Common myeloid progenitor, CD34-positive (primary cell): ENCODE measurements at regions of chr20 and their contacts with region 1.

Region 1: DNA sequence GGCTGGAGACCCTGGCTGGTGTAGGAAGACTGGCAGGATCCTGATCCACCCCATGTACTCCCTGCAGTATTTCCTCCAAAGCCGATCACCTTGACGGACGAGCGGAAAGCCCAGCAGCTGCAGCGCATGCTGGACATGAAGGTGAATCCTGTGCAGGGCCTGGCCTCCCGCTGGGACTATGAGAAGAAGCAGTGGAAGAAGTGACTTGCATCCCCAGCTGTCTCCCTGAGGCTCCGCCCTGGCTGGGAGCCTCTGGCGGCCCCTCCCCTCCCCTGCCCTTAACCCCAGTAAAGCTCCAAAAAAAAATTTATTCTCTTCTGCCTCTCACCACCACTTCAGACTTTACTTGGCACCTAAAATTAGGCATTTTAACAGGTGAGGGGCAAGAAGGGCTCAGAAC is 7.0 kb downstream of the COX4I2 start:
- DNase-seq: no peak
- H3K4me3 ChIP-seq: no peak overlapping the region
- H3K27ac ChIP-seq: no peak overlapping the region
- H3K4me1 ChIP-seq: peaks cover 0 to 8% (median 4%) of the 10 kb centered on the region in 4 experiments
- H3K27me3 ChIP-seq: no peaks in the 10 kb centered on the region

Region 2: DNA sequence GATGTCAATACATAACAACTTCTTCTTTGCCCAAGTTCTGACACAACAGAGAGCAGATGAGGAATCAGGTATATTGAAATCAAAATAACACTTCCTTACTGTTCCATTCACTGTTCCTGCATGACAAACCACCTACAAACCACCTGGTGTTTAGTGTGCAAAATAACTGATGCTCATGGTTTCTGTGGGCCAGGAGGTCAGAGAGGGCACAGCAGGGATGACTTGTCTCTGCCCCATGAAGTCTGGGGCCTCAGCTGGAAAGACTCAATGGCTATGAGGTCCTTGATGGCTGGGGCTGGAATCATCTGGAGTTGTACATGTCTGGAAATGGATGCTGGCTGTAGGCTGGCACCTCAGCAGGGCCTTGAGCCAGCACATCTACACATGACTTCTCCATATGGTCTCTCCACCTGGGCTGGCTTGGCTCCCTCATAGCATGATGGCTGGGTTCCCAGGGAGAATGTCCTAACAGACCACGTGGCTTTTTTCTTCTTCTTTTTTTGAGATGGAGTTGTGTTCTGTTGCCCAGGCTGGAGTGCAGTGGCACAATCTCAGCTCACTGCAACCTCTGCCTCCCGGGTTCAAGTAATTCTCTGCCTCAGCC is 14.4 kb before region 1 on chr20:
- CTCF ChIA-PET with region 1: interaction called, 53 read pairs
- POLR2A ChIA-PET with region 1: no interaction called
- DNase-seq: no peak
- H3K4me3 ChIP-seq: no peak overlapping the region
- H3K27ac ChIP-seq: no peak overlapping the region
- H3K4me1 ChIP-seq: no peaks in the 10 kb centered on the region
- H3K27me3 ChIP-seq: no peaks in the 10 kb centered on the region

Region 3: DNA sequence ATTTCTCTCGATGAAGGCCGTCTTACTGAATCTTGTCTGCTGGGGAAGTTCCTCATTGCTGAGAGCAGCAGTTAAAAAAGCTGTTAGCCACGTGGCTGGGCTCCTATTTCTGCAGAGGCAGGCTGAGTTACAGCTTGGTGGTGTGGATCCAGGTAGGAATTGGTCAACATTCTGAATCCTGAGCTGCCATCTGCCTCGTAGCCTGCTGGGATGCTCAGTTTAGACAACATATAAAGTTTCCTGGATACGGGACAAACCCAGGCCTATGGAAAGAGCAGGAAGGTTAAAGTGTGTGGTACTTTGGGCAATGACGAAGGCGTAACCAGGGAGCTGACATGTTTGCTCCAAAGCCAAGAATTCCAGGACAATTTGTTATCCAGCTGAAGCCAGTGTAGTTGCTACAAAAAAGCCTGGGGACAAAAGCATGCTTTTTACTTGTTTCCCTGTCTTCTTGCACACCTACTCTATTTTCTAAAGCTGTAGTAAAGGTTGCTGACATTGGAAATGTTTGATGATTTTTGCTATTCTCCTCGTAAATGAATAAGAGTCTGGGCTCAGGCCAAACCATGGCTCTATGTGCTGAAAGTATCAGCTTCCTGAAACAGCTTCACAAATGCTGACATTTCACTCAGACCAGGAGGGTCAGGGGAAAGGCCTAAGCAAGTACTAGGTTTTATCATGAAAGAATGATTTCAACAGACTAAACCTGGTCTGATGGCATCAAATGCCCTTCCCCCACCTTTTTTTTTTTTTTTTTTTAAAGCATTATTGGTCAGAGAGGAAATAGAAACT is 162.1 kb after region 1 on chr20:
- CTCF ChIA-PET with region 1: no interaction called
- POLR2A ChIA-PET with region 1: no interaction called
- DNase-seq: peak in 2 of 3 donors; percentile 29 to 42
- H3K4me3 ChIP-seq: peak overlapping the region in 1 of 7 experiments; percentile 2
- H3K27ac ChIP-seq: no peak overlapping the region
- H3K4me1 ChIP-seq: peaks cover 5 to 36% (median 27%) of the 10 kb centered on the region in 4 experiments
- H3K27me3 ChIP-seq: no peaks in the 10 kb centered on the region